ENCODE measurements at regions of chr5 and their contacts with region 1.

Region 1: GRCh38 chr5:177425801-177426565 is 493 bp upstream of the GRK6 start:
- DNase-seq: peak; percentile 94 to 100 (median 100)
- ATAC-seq: peak; percentile 82 to 84
- H3K4me3 Mint-ChIP-seq: peak overlapping the region; percentile 82 to 98 (median 94)
- H3K27ac Mint-ChIP-seq: peak overlapping the region; percentile 92 to 100 (median 98)
- H3K4me1 Mint-ChIP-seq: peaks cover 28 to 58% (median 49%) of the 10 kb centered on the region in 4 donors
- H3K27me3 Mint-ChIP-seq: no peaks in the 10 kb centered on the region

Region 2: DNA sequence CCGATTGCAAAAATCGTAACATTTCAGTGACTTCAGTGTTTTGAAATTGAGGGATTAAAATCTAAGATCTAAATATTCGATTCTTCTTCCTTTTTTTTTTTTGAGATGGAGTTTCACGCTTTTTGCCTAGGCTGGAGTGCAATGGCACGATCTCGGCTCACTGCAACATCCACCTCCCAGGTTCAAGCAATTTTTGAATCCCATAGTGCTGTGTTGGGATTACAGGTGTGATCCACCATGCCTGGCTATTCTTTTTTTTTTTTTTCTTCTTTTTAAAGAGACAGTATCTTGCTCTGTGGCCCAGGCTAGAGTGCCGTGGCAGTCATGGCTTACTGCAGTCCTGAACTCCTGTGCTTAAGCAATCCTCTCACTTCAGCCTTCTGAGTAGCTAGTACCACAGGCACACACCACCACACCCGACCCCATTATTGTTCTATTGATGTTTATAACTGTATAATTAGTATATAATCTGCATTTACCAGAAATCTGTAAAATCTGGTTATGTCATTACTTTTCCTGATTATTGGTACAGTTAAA is 249.7 kb before region 1 on chr5:
- POLR2A ChIA-PET with region 1: no interaction called
- DNase-seq: no peak
- ATAC-seq: no peak
- H3K4me3 Mint-ChIP-seq: no peak overlapping the region
- H3K27ac Mint-ChIP-seq: peak overlapping the region in 5 of 10 donors; percentile 21 to 68 (median 38)
- H3K4me1 Mint-ChIP-seq: peaks cover 14 to 52% (median 44%) of the 10 kb centered on the region in 4 donors
- H3K27me3 Mint-ChIP-seq: no peaks in the 10 kb centered on the region

Region 3: DNA sequence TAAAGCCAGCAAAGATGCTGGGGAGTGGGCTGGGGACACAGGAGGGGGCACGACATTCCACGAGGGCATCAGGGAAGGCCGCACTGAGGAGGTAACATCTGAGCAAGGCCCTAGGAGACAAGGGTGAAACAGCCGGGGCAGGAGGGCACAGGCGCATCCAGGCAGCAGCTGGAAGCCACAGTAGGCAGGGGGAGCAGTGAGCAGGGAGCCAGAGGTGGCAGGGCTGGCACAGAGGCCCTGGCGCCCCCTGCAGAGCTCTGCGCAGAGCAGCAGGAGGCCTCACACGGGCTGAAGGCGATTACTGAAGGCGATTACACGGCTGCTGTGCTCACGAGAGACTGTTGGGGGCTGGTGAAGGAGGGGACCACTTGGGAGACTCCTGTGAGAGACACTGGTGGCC is 89.9 kb before region 1 on chr5:
- POLR2A ChIA-PET with region 1: no interaction called
- DNase-seq: peak in 1 of 10 donors; percentile 19
- ATAC-seq: peak; percentile 68 to 73
- H3K4me3 Mint-ChIP-seq: peak overlapping the region in 1 of 10 donors; percentile 14
- H3K27ac Mint-ChIP-seq: peak overlapping the region in 1 of 10 donors; percentile 52
- H3K4me1 Mint-ChIP-seq: peaks cover 6 to 35% (median 28%) of the 10 kb centered on the region in 4 donors
- H3K27me3 Mint-ChIP-seq: no peaks in the 10 kb centered on the region

Region 4: DNA sequence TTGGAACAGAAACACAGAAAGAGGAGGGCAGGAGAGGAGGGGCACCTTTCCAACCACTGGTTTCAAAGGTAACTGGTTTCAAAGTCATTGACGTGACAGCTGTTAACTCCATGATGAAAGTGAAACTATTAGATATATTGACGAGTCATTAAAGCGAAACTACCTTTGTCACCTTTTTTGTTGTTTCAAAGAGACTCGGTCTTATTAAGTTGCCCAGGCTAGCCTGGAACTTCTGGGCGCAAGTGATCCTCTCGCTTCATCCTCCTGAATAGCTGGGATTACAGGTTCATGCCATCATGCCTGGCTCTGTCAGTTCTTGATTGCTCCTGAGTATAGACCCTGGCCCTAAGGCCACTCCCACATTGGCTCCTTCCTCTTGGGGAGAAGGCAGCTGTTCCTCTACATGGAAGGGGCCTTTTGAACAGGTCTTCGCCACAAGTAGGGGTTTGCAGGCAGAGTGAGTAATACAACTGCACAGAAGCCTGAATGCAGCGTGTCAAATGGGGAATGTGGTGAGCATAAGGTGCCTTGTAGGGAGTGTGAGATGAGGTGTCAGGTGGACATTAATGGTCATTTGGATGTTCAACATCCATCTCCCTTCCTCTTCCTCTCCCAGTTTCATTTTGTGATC is 13.3 kb before region 1 on chr5:
- POLR2A ChIA-PET with region 1: interaction called, 285 read pairs
- DNase-seq: no peak
- ATAC-seq: no peak
- H3K4me3 Mint-ChIP-seq: peak overlapping the region in 3 of 10 donors; percentile 30 to 72 (median 45)
- H3K27ac Mint-ChIP-seq: peak overlapping the region in 3 of 10 donors; percentile 58 to 91 (median 75)
- H3K4me1 Mint-ChIP-seq: peaks cover 8 to 46% (median 33%) of the 10 kb centered on the region in 4 donors
- H3K27me3 Mint-ChIP-seq: no peaks in the 10 kb centered on the region

Region 5: GRCh38 chr5:177454397-177455035 is 28.5 kb after region 1 on chr5:
- POLR2A ChIA-PET with region 1: interaction called, 1,530 read pairs
- DNase-seq: peak; percentile 84 to 98 (median 94)
- ATAC-seq: peak; percentile 46 to 56
- H3K4me3 Mint-ChIP-seq: peak overlapping the region; percentile 33 to 93 (median 84)
- H3K27ac Mint-ChIP-seq: peak overlapping the region in 8 of 10 donors; percentile 67 to 98 (median 90)
- H3K4me1 Mint-ChIP-seq: peaks cover 14 to 41% (median 28%) of the 10 kb centered on the region in 4 donors
- H3K27me3 Mint-ChIP-seq: no peaks in the 10 kb centered on the region

Region 6: DNA sequence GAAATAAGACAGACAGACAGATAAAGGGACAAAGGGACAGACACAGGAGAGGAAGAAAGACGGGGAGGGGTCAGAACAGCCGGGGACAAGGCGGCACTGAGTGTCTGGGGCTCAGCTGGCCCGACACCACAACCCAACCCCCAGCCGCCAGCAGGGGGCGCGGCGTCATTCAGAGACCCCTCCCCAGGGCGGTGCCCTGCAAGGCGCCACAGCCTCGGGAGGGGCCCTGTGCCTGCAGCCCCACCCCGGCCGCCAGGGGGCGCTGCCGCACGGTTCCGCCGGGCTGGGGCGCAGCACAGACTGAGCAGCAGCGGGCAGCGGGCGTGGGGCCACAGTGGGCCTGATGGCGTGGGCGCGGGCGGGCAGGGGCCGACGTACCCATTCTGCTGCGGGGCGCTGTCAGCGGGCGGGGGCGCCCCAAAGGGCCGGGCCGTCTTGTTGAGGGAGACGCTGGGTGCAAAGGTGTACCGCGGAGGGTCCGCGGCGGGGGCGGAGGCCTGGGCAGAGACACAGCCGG is 65.5 kb after region 1 on chr5:
- POLR2A ChIA-PET with region 1: no interaction called
- DNase-seq: peak in 1 of 10 donors; percentile 31
- ATAC-seq: peak in 1 of 2 donors; percentile 66
- H3K4me3 Mint-ChIP-seq: no peak overlapping the region
- H3K27ac Mint-ChIP-seq: no peak overlapping the region
- H3K4me1 Mint-ChIP-seq: peaks cover 7 to 26% (median 21%) of the 10 kb centered on the region in 4 donors
- H3K27me3 Mint-ChIP-seq: no peaks in the 10 kb centered on the region

Measured in naive thymus-derived CD8-positive, alpha-beta T cell (primary cell).